OCI-LY7 (cell line): ENCODE measurements at regions of chr11 and their contacts with region 1.

Region 1: DNA sequence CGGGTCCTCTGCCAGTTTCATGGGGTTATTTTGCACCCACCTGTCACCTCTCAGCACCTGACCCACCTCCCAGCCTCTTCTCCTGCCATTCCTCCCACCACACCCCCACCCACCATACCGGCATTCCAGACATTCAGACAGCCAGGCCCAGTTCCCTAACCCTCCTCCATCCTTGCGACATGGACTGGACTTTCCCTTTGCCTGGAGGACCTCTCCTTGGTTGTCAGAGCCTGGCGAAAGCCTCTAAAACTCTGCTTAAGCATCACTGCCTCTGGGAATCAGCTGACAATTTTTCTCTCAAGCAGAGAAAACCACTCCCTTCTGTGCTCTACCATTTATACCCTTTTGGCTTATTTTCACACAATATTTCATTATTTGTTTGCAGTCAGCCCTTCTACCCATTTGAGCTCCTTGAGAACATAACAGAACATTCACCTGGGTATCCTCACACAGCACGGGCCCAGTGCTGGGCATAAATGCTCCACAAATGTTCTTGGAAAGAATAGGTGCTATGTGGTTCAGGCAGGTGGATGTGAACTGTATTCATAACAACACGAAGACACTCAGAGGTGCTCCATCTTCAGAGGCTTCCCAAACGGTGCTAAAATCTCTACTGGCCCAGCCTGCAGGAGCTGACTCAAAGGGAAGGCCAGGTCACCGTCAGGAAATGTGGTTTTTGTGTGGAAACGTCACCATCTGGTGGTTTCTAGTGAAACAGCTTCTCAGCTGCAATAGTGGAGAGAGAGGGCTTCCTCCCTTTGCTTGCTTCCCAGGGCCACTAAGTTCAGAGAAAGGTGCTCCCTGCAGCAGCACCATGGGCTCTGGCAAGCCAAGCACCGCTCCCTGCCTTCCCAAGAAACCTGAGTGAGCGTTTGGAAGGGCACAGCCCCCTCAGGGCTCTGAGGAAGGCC is 10.4 kb downstream of the SPATA19 start:
- DNase-seq: peak; percentile 31
- H3K4me3 ChIP-seq: no peak overlapping the region
- H3K27ac ChIP-seq: no peak overlapping the region
- H3K4me1 ChIP-seq: no peaks in the 10 kb centered on the region
- CTCF ChIP-seq: peak; percentile 65

Region 2: DNA sequence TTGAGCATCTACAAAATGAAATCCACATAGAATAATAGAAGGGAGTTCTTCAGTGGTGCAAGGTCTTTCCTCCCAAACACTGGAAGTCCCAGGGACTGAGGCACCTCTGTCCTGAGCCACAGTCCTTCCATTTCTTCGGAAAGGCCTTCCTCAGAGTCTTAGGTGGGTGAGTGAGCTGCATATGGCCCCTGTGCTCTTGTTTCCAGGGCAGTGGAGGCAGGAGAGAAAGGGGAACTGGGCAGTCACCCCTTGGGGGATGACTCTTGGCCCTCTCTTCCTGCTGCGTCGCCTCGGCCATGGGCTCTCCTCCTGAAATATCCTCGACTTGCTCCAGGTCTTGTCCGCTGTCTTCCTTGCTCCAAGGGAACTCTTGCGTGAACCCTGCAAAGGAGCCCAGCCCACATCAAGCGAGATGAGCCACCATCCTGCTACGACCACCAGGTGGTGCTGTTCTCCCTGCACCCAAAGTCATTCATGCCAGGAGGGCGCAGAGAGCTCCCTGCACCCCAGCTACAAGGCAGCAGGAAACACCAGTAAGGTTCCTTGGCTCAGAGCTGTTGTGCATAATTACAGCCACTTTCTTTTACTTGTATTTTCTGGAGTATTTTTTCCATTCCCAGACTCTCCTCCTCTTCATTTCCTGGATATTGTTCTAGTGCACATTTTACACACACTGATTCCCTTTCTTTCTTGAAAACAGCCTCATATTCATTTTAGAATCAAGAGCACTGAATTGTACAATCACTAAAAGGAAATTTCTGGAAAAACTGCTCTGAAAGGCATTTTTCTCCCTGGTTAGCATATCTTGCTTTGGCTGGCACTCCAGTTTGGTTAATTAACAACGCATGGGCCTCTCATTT is 700.4 kb before region 1 on chr11:
- CTCF ChIA-PET with region 1: no interaction called
- POLR2A ChIA-PET with region 1: no interaction called
- intact Hi-C with region 1: loop called (anchors 5 kb)
- DNase-seq: peak; percentile 49
- H3K4me3 ChIP-seq: no peak overlapping the region
- H3K27ac ChIP-seq: no peak overlapping the region
- H3K4me1 ChIP-seq: no peaks in the 10 kb centered on the region
- CTCF ChIP-seq: peak; percentile 89